Mammary epithelial cell (primary cell): ENCODE measurements at regions of chr1 and their contacts with region 1.

Region 1: DNA sequence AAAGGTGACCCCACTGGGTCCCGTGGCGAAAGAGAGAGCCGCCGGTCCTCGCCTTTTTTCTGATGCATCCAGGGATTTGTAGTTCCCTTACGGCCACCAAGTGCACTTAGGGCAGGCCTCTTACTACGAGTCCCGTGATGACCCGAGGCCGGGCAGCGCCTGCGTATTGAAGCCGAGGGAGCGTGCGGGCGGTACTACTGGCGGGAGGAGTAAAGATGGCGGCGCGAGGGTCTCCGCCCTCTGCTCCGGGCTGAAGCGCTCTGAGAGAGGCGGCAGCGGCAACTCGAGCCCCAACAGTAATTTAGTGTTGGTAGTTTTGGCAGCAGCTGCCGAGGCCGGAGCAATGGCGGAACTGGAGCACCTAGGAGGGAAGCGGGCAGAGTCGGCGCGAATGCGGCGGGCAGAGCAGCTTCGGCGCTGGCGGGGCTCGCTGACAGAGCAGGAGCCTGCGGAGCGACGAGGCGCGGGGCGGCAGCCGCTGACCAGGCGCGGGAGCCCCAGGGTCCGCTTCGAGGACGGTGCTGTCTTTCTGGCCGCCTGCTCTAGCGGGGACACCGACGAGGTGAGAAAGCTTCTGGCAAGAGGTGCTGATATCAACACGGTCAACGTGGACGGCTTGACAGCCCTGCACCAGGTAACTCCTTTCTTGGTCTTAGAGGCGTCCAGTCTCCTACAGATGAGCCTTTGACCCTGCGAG is at the start of gene PPP1R12B:
- DNase-seq: peak; percentile 98
- H3K4me3 ChIP-seq: peak within 1 kb of the TSS; percentile 95 to 97 (median 97)
- H3K27ac ChIP-seq: peak within 1 kb of the TSS; percentile 84
- H3K4me1 ChIP-seq: peaks cover 8% of the 10 kb centered on the region
- H3K27me3 ChIP-seq: no peaks in the 10 kb centered on the region
- CTCF ChIP-seq: no peak
- total RNA-seq, gene PPP1R12B: 13.5 to 42.0 TPM

Region 2: GRCh38 chr1:202462342-202463076 is 113.9 kb after region 1 on chr1:
- CTCF ChIA-PET with region 1: interaction called, 3 read pairs
- dilution Hi-C with region 1: no loop called
- in situ Hi-C with region 1: no loop called
- intact Hi-C with region 1: loop called (anchors 5 kb)
- DNase-seq: no peak
- H3K4me3 ChIP-seq: no peak overlapping the region
- H3K27ac ChIP-seq: no peak overlapping the region
- H3K4me1 ChIP-seq: peaks cover 7% of the 10 kb centered on the region
- H3K27me3 ChIP-seq: no peaks in the 10 kb centered on the region
- CTCF ChIP-seq: no peak

Region 3: GRCh38 chr1:202565890-202566602 is 217.4 kb after region 1 on chr1:
- CTCF ChIA-PET with region 1: no interaction called
- dilution Hi-C with region 1: no loop called
- in situ Hi-C with region 1: no loop called
- intact Hi-C with region 1: no loop called
- DNase-seq: no peak
- H3K4me3 ChIP-seq: no peak overlapping the region
- H3K27ac ChIP-seq: no peak overlapping the region
- H3K4me1 ChIP-seq: peaks cover 25% of the 10 kb centered on the region
- H3K27me3 ChIP-seq: no peaks in the 10 kb centered on the region
- CTCF ChIP-seq: no peak

Region 4: GRCh38 chr1:202625416-202626360 is 277.0 kb after region 1 on chr1:
- CTCF ChIA-PET with region 1: interaction called, 3 read pairs
- dilution Hi-C with region 1: no loop called
- in situ Hi-C with region 1: loop called in 1 of 2 experiments (anchors 25 kb)
- intact Hi-C with region 1: loop called (anchors 5 kb)
- DNase-seq: peak; percentile 17
- H3K4me3 ChIP-seq: no peak overlapping the region
- H3K27ac ChIP-seq: no peak overlapping the region
- H3K4me1 ChIP-seq: no peaks in the 10 kb centered on the region
- H3K27me3 ChIP-seq: no peaks in the 10 kb centered on the region
- CTCF ChIP-seq: peak; percentile 41 to 69